HEK293T (cell line): ENCODE measurements at regions of chr3 and their contacts with region 1.

Region 1: GRCh38 chr3:31531992-31532586 is 636 bp upstream of the STT3B start:
- DNase-seq: peak; percentile 94

Region 2: GRCh38 chr3:31495971-31496665 is 36.0 kb before region 1 on chr3:
- CTCF ChIA-PET with region 1: no interaction called
- POLR2A ChIA-PET with region 1: no interaction called
- DNase-seq: no peak

Region 3: GRCh38 chr3:31544634-31545033 is 12.5 kb after region 1 on chr3:
- CTCF ChIA-PET with region 1: interaction called, 4 read pairs
- POLR2A ChIA-PET with region 1: interaction called, 41 read pairs
- DNase-seq: no peak

Region 4: GRCh38 chr3:31553258-31553657 is 21.2 kb after region 1 on chr3:
- CTCF ChIA-PET with region 1: interaction called, 4 read pairs
- POLR2A ChIA-PET with region 1: interaction called, 11 read pairs
- DNase-seq: no peak

Region 5: GRCh38 chr3:31590650-31591049 is 58.6 kb after region 1 on chr3:
- CTCF ChIA-PET with region 1: no interaction called
- POLR2A ChIA-PET with region 1: no interaction called
- DNase-seq: no peak

Region 6: DNA sequence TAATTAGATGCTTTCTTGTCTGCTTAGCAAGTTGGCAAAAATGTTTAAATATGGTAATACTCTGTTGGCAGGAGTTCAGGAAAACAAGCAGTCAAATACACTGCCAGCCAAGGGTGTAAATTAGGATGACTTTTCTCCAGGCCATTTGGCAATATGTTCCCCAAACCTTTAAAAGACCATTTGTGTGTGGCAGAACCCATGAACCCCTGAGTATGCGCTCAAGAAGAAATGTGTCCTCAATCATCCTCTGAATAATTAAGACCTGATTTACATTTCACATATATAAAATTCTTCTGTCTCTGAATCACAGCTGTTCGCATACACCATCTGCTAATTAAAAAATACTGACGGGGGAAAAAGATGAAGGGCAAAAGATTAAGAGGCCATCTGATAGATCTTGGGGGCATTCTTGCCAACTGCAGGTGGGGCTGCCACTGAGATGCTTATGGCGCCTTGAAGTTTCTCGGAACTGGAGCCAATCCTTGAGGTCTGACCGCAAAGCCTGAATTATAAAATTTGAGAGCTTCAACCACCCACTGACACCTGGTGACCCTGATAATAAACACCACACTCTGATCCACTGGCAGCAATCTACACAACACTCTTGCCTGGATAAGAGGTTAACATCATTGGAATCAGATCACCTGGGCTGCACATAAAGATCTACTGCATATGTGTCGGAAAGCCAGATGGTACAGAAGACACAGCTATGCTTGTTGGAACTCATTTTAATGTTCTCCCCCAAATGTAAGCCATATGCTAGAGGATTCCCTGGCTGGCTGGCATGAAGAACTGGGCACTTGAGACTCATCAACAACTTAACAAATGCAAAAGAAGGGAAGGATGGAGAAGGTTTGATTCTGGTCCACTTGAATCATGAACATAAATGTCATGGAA is 258.4 kb after region 1 on chr3:
- CTCF ChIA-PET with region 1: no interaction called
- POLR2A ChIA-PET with region 1: no interaction called
- DNase-seq: no peak